CD8-positive, alpha-beta T cell (primary cell): ENCODE measurements at regions of chr1 and their contacts with region 1.

Region 1: DNA sequence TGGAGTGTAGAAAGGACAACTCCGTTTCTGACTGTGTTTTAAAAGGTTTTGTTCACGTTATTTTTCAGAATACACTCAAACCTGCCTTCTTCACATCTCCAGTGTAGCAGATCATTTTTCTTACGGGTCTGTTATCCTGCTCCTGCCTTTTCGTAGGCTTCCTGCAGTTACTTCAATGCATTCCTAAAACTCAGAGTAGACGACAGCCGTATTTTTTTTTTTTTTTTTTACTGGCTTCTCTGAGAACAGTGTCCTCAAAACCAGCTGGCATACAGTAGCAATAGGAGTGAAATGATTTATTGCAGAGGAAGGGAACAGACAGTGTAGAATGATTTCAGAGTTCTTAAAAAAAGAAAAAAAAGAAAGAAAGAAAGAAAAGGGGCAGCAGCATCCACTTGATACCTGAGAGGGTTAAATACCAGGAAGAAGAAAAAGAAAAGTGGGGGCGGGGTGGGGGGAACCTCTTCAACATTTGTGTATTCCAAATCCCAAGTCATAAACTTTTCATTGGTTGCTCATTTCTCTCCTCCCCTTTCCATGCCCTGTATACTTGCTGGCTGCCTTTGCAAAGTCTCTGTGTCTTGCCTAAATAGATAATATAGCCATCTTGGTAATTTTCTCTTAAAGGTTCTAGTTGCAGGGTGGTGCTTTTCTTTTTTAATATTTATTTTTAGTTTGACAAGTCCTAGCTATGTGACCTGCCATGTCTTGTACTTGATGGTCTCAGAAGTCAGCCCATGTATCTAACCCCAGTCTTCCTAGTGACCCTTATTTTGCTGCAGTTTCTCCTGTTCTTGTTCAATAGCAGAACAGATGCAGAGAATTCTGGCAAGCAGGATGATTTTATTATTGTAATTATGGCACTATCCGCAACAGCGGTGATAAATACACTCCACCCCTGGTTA is 2.8 kb downstream of the TGFB2 start:
- DNase-seq: no peak
- ATAC-seq: no peak
- H3K4me3 ChIP-seq: no peak overlapping the region
- H3K4me3 Mint-ChIP-seq: peak overlapping the region; percentile 23
- H3K27ac ChIP-seq: no peak overlapping the region
- H3K27ac Mint-ChIP-seq: no peak overlapping the region
- H3K4me1 ChIP-seq: peaks cover 35% of the 10 kb centered on the region
- H3K4me1 Mint-ChIP-seq: peaks cover 37% of the 10 kb centered on the region
- H3K27me3 ChIP-seq: peaks cover 0 to 4% of the 10 kb centered on the region in 2 experiments
- H3K27me3 Mint-ChIP-seq: peaks cover 10% of the 10 kb centered on the region
- CTCF ChIP-seq: no peak

Region 2: GRCh38 chr1:218304281-218305039 is 43.5 kb before region 1 on chr1:
- CTCF ChIA-PET with region 1: interaction called, 3 read pairs
- POLR2A ChIA-PET with region 1: no interaction called
- intact Hi-C with region 1: loop called in 1 of 2 experiments (anchors 1 kb)
- DNase-seq: no peak
- ATAC-seq: no peak
- H3K4me3 ChIP-seq: no peak overlapping the region
- H3K4me3 Mint-ChIP-seq: no peak overlapping the region
- H3K27ac ChIP-seq: no peak overlapping the region
- H3K27ac Mint-ChIP-seq: no peak overlapping the region
- H3K4me1 ChIP-seq: peaks cover 4% of the 10 kb centered on the region
- H3K4me1 Mint-ChIP-seq: peaks cover 12% of the 10 kb centered on the region
- H3K27me3 ChIP-seq: no peaks in the 10 kb centered on the region
- H3K27me3 Mint-ChIP-seq: no peaks in the 10 kb centered on the region
- CTCF ChIP-seq: no peak

Region 3: GRCh38 chr1:218537122-218537904 is 189.3 kb after region 1 on chr1:
- CTCF ChIA-PET with region 1: no interaction called
- POLR2A ChIA-PET with region 1: no interaction called
- intact Hi-C with region 1: no loop called
- DNase-seq: no peak
- ATAC-seq: no peak
- H3K4me3 ChIP-seq: no peak overlapping the region
- H3K4me3 Mint-ChIP-seq: no peak overlapping the region
- H3K27ac ChIP-seq: no peak overlapping the region
- H3K27ac Mint-ChIP-seq: no peak overlapping the region
- H3K4me1 ChIP-seq: no peaks in the 10 kb centered on the region
- H3K4me1 Mint-ChIP-seq: no peaks in the 10 kb centered on the region
- H3K27me3 ChIP-seq: no peaks in the 10 kb centered on the region
- H3K27me3 Mint-ChIP-seq: no peaks in the 10 kb centered on the region
- CTCF ChIP-seq: no peak